Gastrocnemius medialis (tissue), 4 donors: ENCODE measurements at regions of chr18 and their contacts with region 1.

Region 1: DNA sequence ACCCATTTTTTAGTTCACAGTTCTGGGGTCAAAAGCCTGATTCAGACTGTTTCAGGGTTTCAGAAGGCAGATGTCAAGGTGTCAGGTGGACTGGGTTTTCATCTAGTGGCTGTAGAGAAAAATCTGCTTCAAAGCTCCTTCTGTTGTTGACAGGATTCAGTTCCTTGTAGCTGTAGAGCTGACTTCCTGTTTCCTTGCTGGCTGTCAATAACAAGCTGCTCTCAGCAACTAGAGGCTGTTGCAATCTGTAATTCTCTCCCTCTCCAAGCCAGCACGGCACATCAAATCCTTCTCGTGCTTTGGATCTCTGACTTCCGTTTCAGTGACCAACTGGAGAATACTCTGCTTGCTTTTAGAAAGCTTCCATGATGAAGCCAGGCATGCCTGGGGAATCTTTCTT is 179.4 kb downstream of the DOK6 start:
- DNase-seq: no peak
- ATAC-seq: peak in 1 of 2 donors; percentile 27
- H3K4me3 ChIP-seq: no peak overlapping the region
- H3K27ac ChIP-seq: no peak overlapping the region
- H3K4me1 ChIP-seq: no peaks in the 10 kb centered on the region
- H3K27me3 ChIP-seq: no peaks in the 10 kb centered on the region
- CTCF ChIP-seq: no peak
- POLR2A ChIP-seq: no peak

Region 2: GRCh38 chr18:69349912-69350597 is 230.1 kb before region 1 on chr18:
- in situ Hi-C with region 1: no loop called
- intact Hi-C with region 1: no loop called
- DNase-seq: no peak
- ATAC-seq: no peak
- H3K4me3 ChIP-seq: no peak overlapping the region
- H3K27ac ChIP-seq: no peak overlapping the region
- H3K4me1 ChIP-seq: no peaks in the 10 kb centered on the region
- H3K27me3 ChIP-seq: no peaks in the 10 kb centered on the region
- CTCF ChIP-seq: no peak
- POLR2A ChIP-seq: no peak

Region 3: GRCh38 chr18:69691008-69691760 is 111.1 kb after region 1 on chr18:
- in situ Hi-C with region 1: loop called in 1 of 4 experiments (anchors 25 kb)
- intact Hi-C with region 1: no loop called
- DNase-seq: no peak
- ATAC-seq: no peak
- H3K4me3 ChIP-seq: no peak overlapping the region
- H3K27ac ChIP-seq: no peak overlapping the region
- H3K4me1 ChIP-seq: no peaks in the 10 kb centered on the region
- H3K27me3 ChIP-seq: no peaks in the 10 kb centered on the region
- CTCF ChIP-seq: no peak
- POLR2A ChIP-seq: no peak